ENCODE measurements at regions of chr16 and their contacts with region 1.

Region 1: DNA sequence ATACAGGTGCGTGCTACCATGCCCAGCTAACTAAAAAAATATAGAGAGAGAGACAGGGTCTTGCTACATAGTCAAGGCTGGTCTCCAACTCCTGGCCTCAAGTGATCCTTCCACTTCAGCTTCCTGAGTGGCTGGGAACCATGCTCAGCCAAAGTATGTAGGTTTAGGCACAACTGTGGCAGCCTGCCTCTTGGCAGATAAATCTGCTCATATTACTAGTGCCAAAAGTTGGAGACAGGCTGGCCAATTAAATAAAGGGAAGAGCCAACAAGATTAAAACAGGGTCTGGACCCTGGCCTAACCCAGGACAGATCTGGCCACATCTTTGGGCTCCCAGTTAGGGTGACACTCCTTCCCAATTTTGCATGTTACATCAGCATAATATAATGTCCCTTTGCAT is 151.7 kb downstream of the CBLN1 start:
- DNase-seq: no peak
- H3K4me3 Mint-ChIP-seq: no peak overlapping the region
- H3K27ac Mint-ChIP-seq: no peak overlapping the region
- H3K4me1 Mint-ChIP-seq: no peaks in the 10 kb centered on the region
- H3K27me3 Mint-ChIP-seq: peaks cover 20% of the 10 kb centered on the region
- CTCF ChIP-seq: no peak

Region 2: GRCh38 chr16:49168126-49168525 is 38.2 kb after region 1 on chr16:
- CTCF ChIA-PET with region 1: no interaction called
- POLR2A ChIA-PET with region 1: no interaction called
- intact Hi-C with region 1: no loop called
- DNase-seq: no peak
- H3K4me3 Mint-ChIP-seq: no peak overlapping the region
- H3K27ac Mint-ChIP-seq: no peak overlapping the region
- H3K4me1 Mint-ChIP-seq: no peaks in the 10 kb centered on the region
- H3K27me3 Mint-ChIP-seq: peaks cover 43% of the 10 kb centered on the region
- CTCF ChIP-seq: no peak

Region 3: GRCh38 chr16:49259330-49259729 is 129.4 kb after region 1 on chr16:
- CTCF ChIA-PET with region 1: no interaction called
- POLR2A ChIA-PET with region 1: no interaction called
- intact Hi-C with region 1: loop called (anchors 5 kb)
- DNase-seq: no peak
- H3K4me3 Mint-ChIP-seq: no peak overlapping the region
- H3K27ac Mint-ChIP-seq: no peak overlapping the region
- H3K4me1 Mint-ChIP-seq: no peaks in the 10 kb centered on the region
- H3K27me3 Mint-ChIP-seq: no peaks in the 10 kb centered on the region
- CTCF ChIP-seq: no peak

Measured in MCF 10A (cell line).